MCF 10A (cell line): ENCODE measurements at regions of chr10 and their contacts with region 1.

Region 1: GRCh38 chr10:123994417-123995081 is 98.8 kb downstream of the CHST15 start:
- DNase-seq: peak; percentile 89
- H3K4me3 Mint-ChIP-seq: peak overlapping the region; percentile 75
- H3K27ac Mint-ChIP-seq: no peak overlapping the region
- H3K4me1 Mint-ChIP-seq: peaks cover 42% of the 10 kb centered on the region
- H3K27me3 Mint-ChIP-seq: peaks cover 27% of the 10 kb centered on the region
- CTCF ChIP-seq: peak; percentile 96

Region 2: DNA sequence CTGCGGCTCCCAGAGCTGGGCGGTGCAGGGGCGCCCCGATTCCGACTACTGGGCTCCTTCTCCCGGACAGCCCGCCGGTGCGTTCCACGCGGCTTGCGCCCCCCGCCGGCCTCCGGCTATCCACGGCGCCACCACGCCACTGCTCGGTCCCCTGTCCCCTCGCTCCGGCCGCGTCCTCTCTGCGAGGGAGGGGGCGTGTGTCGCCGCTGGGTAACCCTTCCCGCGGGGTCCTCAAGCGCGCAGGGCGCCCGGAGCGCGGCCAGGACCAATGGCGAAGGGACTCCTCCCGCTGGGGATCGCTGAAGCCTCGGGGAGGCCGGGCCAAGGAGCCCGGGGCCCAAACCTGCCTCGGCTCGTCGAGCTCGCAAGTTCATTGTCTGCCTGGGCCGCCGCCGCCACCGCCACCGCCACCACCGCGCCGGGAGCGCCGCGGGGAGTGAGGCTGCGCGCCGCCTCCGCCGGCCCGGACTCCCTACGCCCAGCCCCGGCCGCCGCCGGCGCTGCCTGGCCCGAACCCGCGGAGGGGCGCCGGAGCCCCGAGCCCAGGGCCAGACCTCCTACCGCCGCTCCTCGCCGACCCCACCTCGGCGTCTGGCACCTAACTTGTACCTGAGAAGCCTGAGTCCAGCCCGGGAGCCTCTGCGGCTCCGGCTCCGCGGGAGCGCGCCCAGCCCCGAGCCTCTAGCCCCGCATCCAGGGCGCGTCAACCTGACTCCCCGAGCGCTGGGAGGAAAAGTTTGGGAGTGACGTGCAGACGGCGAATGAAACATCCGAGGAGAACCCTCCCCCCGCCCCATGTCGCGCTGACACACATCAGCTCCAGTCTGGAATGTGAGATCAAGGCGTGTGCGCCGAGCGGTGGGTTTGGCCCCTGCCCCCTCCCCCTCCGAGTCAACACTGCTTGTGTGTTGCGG is 98.6 kb after region 1 on chr10 and contains the start of gene CHST15:
- CTCF ChIA-PET with region 1: interaction called, 62 read pairs
- POLR2A ChIA-PET with region 1: interaction called, 46 read pairs
- intact Hi-C with region 1: loop called (anchors 1 kb)
- DNase-seq: peak; percentile 83
- H3K4me3 Mint-ChIP-seq: peak within 1 kb of the TSS; percentile 79
- H3K27ac Mint-ChIP-seq: peak within 1 kb of the TSS; percentile 54
- H3K4me1 Mint-ChIP-seq: peaks cover 25% of the 10 kb centered on the region
- H3K27me3 Mint-ChIP-seq: no peaks in the 10 kb centered on the region
- CTCF ChIP-seq: no peak
- total RNA-seq, gene CHST15: 32.8 and 38.8 TPM in 2 replicates

Region 3: GRCh38 chr10:124259139-124259825 is 264.7 kb after region 1 on chr10:
- CTCF ChIA-PET with region 1: no interaction called
- POLR2A ChIA-PET with region 1: no interaction called
- intact Hi-C with region 1: loop called (anchors 1 kb)
- DNase-seq: peak; percentile 35
- H3K4me3 Mint-ChIP-seq: no peak overlapping the region
- H3K27ac Mint-ChIP-seq: no peak overlapping the region
- H3K4me1 Mint-ChIP-seq: no peaks in the 10 kb centered on the region
- H3K27me3 Mint-ChIP-seq: no peaks in the 10 kb centered on the region
- CTCF ChIP-seq: no peak

Region 4: DNA sequence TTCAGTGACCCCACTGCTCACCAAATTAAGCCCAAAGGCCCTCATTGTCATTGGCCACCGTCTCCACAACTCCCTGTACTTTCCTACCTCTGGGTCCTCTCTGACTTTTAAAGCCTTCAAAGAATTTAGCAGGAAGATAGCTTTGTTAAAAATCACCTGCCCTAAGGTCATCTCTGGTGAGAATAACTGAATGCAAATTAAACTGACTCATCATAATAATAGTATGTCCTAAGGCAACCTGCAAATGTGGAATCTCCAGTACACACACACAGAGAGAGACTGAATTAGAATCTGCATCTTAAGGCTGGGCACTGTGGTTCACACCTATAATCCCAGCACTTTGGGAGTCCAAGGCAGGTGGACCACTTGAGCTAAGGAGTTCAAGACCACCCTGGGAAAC is 400.0 kb after region 1 on chr10:
- CTCF ChIA-PET with region 1: interaction called, 306 read pairs
- POLR2A ChIA-PET with region 1: interaction called, 52 read pairs
- intact Hi-C with region 1: loop called (anchors 1 kb)
- DNase-seq: peak; percentile 33
- H3K4me3 Mint-ChIP-seq: no peak overlapping the region
- H3K27ac Mint-ChIP-seq: peak overlapping the region; percentile 2
- H3K4me1 Mint-ChIP-seq: peaks cover 11% of the 10 kb centered on the region
- H3K27me3 Mint-ChIP-seq: no peaks in the 10 kb centered on the region
- CTCF ChIP-seq: no peak

Region 5: DNA sequence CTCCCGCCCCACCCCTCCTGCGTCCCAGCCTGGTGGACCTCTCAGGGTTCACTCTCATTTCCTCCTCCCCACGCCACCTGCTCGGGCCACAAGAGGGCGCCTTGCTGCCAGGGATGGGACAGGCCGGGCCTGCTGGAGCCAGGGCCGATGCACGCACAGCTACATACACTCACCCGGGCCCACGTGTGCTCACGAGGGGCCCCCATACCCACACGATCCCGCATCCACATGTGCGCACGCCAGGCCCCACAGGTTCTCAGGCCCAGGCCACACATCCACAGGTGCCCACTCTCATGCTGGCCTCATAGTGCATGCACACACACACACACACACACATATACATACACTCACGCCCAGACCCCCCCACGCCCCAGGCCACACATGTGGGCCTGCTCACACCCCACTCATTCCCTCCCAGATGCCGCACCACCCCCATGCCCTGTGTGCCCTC is 535.7 kb after region 1 on chr10:
- CTCF ChIA-PET with region 1: interaction called, 8 read pairs
- POLR2A ChIA-PET with region 1: no interaction called
- intact Hi-C with region 1: loop called (anchors 10 kb)
- DNase-seq: peak; percentile 86
- H3K4me3 Mint-ChIP-seq: no peak overlapping the region
- H3K27ac Mint-ChIP-seq: no peak overlapping the region
- H3K4me1 Mint-ChIP-seq: peaks cover 13% of the 10 kb centered on the region
- H3K27me3 Mint-ChIP-seq: no peaks in the 10 kb centered on the region
- CTCF ChIP-seq: peak; percentile 91